ENCODE measurements at regions of chr7 and their contacts with region 1.

Region 1: GRCh38 chr7:99910976-99911375 is 8.4 kb downstream of the TRIM4 start:
- DNase-seq: no peak
- ATAC-seq: no peak
- H3K4me3 ChIP-seq: no peak overlapping the region
- H3K4me3 Mint-ChIP-seq: no peak overlapping the region
- H3K27ac ChIP-seq: no peak overlapping the region
- H3K27ac Mint-ChIP-seq: no peak overlapping the region
- H3K4me1 ChIP-seq: peaks cover 19% of the 10 kb centered on the region
- H3K4me1 Mint-ChIP-seq: peaks cover 63% of the 10 kb centered on the region
- H3K27me3 ChIP-seq: no peaks in the 10 kb centered on the region
- H3K27me3 Mint-ChIP-seq: no peaks in the 10 kb centered on the region
- CTCF ChIP-seq: no peak

Region 2: GRCh38 chr7:99679032-99679399 is 232.0 kb before region 1 on chr7:
- CTCF ChIA-PET with region 1: no interaction called
- POLR2A ChIA-PET with region 1: no interaction called
- intact Hi-C with region 1: no loop called
- DNase-seq: no peak
- ATAC-seq: no peak
- H3K4me3 ChIP-seq: no peak overlapping the region
- H3K4me3 Mint-ChIP-seq: no peak overlapping the region
- H3K27ac ChIP-seq: no peak overlapping the region
- H3K27ac Mint-ChIP-seq: no peak overlapping the region
- H3K4me1 ChIP-seq: peaks cover 12% of the 10 kb centered on the region
- H3K4me1 Mint-ChIP-seq: peaks cover 20% of the 10 kb centered on the region
- H3K27me3 ChIP-seq: no peaks in the 10 kb centered on the region
- H3K27me3 Mint-ChIP-seq: no peaks in the 10 kb centered on the region
- CTCF ChIP-seq: no peak

Region 3: GRCh38 chr7:99928994-99929729 is 18.2 kb after region 1 on chr7 and contains the start of gene GJC3:
- CTCF ChIA-PET with region 1: interaction called, 13 read pairs
- POLR2A ChIA-PET with region 1: no interaction called
- intact Hi-C with region 1: loop called in 1 of 2 experiments (anchors 1 kb)
- DNase-seq: peak in 7 of 9 experiments; percentile 35 to 74 (median 44)
- ATAC-seq: peak; percentile 87
- H3K4me3 ChIP-seq: peak within 1 kb of the TSS; percentile 18 to 41
- H3K4me3 Mint-ChIP-seq: peak within 1 kb of the TSS; percentile 75
- H3K27ac ChIP-seq: no peak within 1 kb of the TSS
- H3K27ac Mint-ChIP-seq: peak within 1 kb of the TSS; percentile 7
- H3K4me1 ChIP-seq: peaks cover 20% of the 10 kb centered on the region
- H3K4me1 Mint-ChIP-seq: peaks cover 23% of the 10 kb centered on the region
- H3K27me3 ChIP-seq: no peaks in the 10 kb centered on the region
- H3K27me3 Mint-ChIP-seq: peaks cover 19% of the 10 kb centered on the region
- CTCF ChIP-seq: no peak
- total RNA-seq, gene GJC3: not detected

Region 4: DNA sequence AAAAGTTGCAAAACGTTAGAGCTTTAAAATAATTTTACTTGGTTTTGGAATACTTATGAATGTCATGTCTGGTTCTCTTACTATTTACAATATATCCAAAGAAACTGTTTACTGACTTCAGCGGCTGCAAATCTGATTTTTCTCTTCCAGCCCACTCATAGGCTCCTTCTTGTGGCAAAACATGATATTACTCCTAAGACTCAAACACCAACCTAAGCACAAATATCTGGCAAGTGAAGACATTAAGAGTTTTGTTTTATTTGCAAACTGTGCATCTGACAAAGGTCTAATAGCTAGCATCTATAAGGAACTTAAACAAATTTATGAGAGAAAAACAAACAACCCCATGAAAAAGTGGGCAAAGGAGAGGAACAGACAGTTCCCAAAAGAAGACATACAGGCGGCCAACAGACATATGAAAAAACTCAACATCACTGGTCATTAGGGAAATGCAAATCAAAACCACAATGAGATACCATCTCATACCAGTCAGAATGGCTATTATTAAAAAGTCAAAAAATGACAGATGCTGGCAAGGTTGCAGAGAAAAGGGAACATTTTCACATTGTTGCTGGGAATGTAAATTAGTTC is 38.8 kb after region 1 on chr7:
- CTCF ChIA-PET with region 1: interaction called, 32 read pairs
- POLR2A ChIA-PET with region 1: no interaction called
- intact Hi-C with region 1: loop called (anchors 1 kb)
- DNase-seq: peak in 2 of 9 experiments; percentile 33 to 35
- ATAC-seq: no peak
- H3K4me3 ChIP-seq: no peak overlapping the region
- H3K4me3 Mint-ChIP-seq: no peak overlapping the region
- H3K27ac ChIP-seq: no peak overlapping the region
- H3K27ac Mint-ChIP-seq: no peak overlapping the region
- H3K4me1 ChIP-seq: no peaks in the 10 kb centered on the region
- H3K4me1 Mint-ChIP-seq: no peaks in the 10 kb centered on the region
- H3K27me3 ChIP-seq: no peaks in the 10 kb centered on the region
- H3K27me3 Mint-ChIP-seq: peaks cover 20% of the 10 kb centered on the region
- CTCF ChIP-seq: no peak

Region 5: GRCh38 chr7:99975782-99976521 is 65.0 kb after region 1 on chr7 and contains the start of gene AZGP1:
- CTCF ChIA-PET with region 1: interaction called, 46 read pairs
- POLR2A ChIA-PET with region 1: no interaction called
- intact Hi-C with region 1: no loop called
- DNase-seq: no peak
- ATAC-seq: no peak
- H3K4me3 ChIP-seq: no peak within 1 kb of the TSS
- H3K4me3 Mint-ChIP-seq: no peak within 1 kb of the TSS
- H3K27ac ChIP-seq: no peak within 1 kb of the TSS
- H3K27ac Mint-ChIP-seq: no peak within 1 kb of the TSS
- H3K4me1 ChIP-seq: no peaks in the 10 kb centered on the region
- H3K4me1 Mint-ChIP-seq: peaks cover 6% of the 10 kb centered on the region
- H3K27me3 ChIP-seq: no peaks in the 10 kb centered on the region
- H3K27me3 Mint-ChIP-seq: peaks cover 4% of the 10 kb centered on the region
- CTCF ChIP-seq: no peak
- total RNA-seq, gene AZGP1: not detected

Region 6: GRCh38 chr7:99990460-99990852 is 79.5 kb after region 1 on chr7:
- CTCF ChIA-PET with region 1: interaction called, 194 read pairs
- POLR2A ChIA-PET with region 1: interaction called, 3 read pairs
- intact Hi-C with region 1: loop called (anchors 1 kb)
- DNase-seq: no peak
- ATAC-seq: no peak
- H3K4me3 ChIP-seq: no peak overlapping the region
- H3K4me3 Mint-ChIP-seq: no peak overlapping the region
- H3K27ac ChIP-seq: no peak overlapping the region
- H3K27ac Mint-ChIP-seq: no peak overlapping the region
- H3K4me1 ChIP-seq: no peaks in the 10 kb centered on the region
- H3K4me1 Mint-ChIP-seq: peaks cover 3% of the 10 kb centered on the region
- H3K27me3 ChIP-seq: no peaks in the 10 kb centered on the region
- H3K27me3 Mint-ChIP-seq: peaks cover 4% of the 10 kb centered on the region
- CTCF ChIP-seq: no peak

Measured in CD8-positive, alpha-beta T cell (primary cell).